Activated CD4-positive, alpha-beta T cell treated with anti-CD3 and anti-CD28 coated beads, Interleukin-2, amount 10 ng/mL, durations not matched to agents 24 days and 14 days (primary cell): ENCODE measurements at regions of chr20 and their contacts with region 1.

Region 1: GRCh38 chr20:51531141-51531710 is 11.3 kb downstream of the NFATC2 start:
- DNase-seq: peak; percentile 84
- H3K4me3 Mint-ChIP-seq: peak overlapping the region; percentile 74
- H3K27ac Mint-ChIP-seq: peak overlapping the region; percentile 98
- H3K4me1 Mint-ChIP-seq: peaks cover 76% of the 10 kb centered on the region
- H3K27me3 Mint-ChIP-seq: no peaks in the 10 kb centered on the region

Region 2: DNA sequence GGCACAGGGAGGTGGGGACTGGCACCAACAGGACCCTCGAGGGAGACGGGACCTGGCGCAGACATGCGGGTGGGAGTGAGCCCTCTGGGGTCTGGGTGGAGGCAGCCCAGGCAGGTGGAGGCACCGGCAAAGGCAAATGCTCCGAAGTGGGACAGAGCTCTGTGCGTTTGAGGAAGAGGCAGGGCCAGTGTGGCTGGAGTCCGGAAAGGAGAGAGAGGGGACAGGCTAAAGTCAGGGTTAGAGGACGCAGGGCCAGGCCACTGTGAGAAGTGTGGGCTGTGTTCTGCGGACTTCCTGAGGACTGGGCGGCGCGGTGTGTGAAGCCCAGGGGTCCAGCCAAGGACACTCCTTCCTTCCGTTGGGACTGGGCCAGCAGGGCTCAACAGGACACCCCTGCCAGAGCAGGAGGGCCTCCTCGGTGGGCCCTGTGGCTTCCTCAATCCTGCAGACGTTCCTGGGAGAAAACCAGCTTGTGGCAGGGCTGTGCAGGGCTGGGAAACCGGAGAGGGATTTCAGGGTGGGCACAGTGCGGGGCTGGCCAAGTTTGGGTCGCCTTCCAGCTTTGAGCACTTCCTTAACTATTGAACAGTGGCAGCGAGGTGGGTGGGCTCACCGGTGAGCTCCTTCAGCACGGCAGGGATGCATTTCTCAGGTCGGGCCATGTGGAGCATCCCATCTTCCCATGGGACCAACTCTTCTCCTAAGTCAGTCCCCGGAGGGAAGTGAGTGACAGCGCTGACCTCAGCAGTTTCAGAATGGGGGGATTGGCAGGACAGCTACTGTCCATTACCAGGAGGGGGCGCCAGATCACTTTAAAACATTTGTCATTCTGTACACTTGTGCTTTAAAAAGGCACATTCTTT is 550.1 kb before region 1 on chr20:
- intact Hi-C with region 1: loop called (anchors 2 kb)
- DNase-seq: peak; percentile 87
- H3K4me3 Mint-ChIP-seq: peak overlapping the region; percentile 40
- H3K27ac Mint-ChIP-seq: peak overlapping the region; percentile 88
- H3K4me1 Mint-ChIP-seq: peaks cover 14% of the 10 kb centered on the region
- H3K27me3 Mint-ChIP-seq: peaks cover 15% of the 10 kb centered on the region

Region 3: DNA sequence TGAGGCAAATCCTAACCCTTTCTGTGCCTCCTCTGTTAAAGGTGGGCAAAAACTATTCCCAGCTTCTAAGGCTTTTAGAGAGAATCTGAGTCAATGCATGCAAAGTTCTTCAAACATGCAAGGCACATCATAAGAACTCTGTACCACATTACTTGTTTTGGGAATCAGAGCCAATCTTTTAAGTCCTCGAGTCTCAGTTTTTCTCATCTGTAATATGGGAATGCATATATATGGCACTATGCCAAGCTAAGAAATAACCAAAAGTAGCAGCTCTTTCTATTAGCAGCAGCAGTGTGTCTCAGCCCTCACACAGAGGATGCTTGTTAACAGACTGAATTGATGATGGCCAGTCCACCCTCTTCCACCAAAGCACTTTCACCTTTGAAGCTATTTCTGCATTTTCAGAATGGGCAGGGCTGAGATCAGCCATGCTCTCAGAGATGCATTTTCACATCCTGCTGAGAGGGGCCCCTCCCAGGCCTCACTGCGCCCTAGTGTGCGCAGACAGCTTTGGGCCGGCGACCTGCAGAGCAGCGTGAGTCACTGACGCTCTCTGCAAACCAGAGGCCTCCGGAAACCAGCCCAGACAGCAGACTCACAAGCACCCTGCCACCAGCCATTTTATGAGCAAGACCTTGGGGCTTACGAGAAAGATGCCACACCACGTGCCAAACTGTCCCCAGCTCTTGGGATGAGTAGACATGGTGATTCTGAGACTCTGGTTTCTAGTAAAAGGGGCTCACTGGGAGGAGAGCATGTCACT is 126.7 kb before region 1 on chr20:
- intact Hi-C with region 1: loop called (anchors 1 kb)
- DNase-seq: peak; percentile 94
- H3K4me3 Mint-ChIP-seq: peak overlapping the region; percentile 75
- H3K27ac Mint-ChIP-seq: peak overlapping the region; percentile 97
- H3K4me1 Mint-ChIP-seq: peaks cover 81% of the 10 kb centered on the region
- H3K27me3 Mint-ChIP-seq: no peaks in the 10 kb centered on the region

Region 4: GRCh38 chr20:51500311-51500710 is 30.9 kb before region 1 on chr20:
- intact Hi-C with region 1: loop called (anchors 1 kb)
- DNase-seq: peak; percentile 85
- H3K4me3 Mint-ChIP-seq: peak overlapping the region; percentile 27
- H3K27ac Mint-ChIP-seq: peak overlapping the region; percentile 85
- H3K4me1 Mint-ChIP-seq: peaks cover 72% of the 10 kb centered on the region
- H3K27me3 Mint-ChIP-seq: no peaks in the 10 kb centered on the region

Region 5: GRCh38 chr20:51512645-51513044 is 18.6 kb before region 1 on chr20:
- intact Hi-C with region 1: loop called (anchors 1 kb)
- DNase-seq: peak; percentile 81
- H3K4me3 Mint-ChIP-seq: peak overlapping the region; percentile 31
- H3K27ac Mint-ChIP-seq: peak overlapping the region; percentile 84
- H3K4me1 Mint-ChIP-seq: peaks cover 66% of the 10 kb centered on the region
- H3K27me3 Mint-ChIP-seq: no peaks in the 10 kb centered on the region

Region 6: DNA sequence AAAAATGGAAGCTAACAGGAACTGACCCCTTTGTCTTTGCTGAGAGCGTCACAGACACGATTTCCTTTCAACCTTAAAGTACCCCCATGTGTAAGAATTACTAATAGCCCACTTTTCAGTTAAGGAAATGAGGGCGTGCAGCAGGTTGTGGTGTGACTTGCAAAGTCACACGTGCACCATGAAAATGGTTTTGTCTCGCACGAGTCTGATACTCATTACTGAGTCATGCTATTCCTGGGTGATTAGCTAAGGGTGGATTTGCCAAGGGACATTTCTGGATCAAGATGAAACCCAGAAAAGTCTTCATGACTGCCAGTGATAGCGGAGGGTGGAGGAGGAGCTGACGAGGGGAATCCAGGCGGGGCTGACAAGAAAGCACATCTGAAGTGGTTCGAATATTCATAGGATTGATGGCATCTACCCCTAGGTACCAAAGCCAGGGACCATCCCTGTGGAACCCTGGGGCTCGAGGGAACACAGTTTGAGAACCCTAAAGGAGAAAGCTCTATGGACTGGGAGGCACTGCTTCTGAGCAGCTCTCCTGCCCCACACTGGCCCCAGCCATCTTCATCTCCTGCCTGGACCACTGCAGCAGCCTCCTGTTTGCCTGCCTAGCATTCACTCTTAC is 23.4 kb after region 1 on chr20:
- intact Hi-C with region 1: no loop called
- DNase-seq: no peak
- H3K4me3 Mint-ChIP-seq: no peak overlapping the region
- H3K27ac Mint-ChIP-seq: no peak overlapping the region
- H3K4me1 Mint-ChIP-seq: peaks cover 7% of the 10 kb centered on the region
- H3K27me3 Mint-ChIP-seq: peaks cover 20% of the 10 kb centered on the region